Activated CD4-positive, alpha-beta memory T cell treated with anti-CD3 and anti-CD28 coated beads, Interleukin-2, amount 10 ng/mL, durations not matched to agents 7 days and 5 days (primary cell): ENCODE measurements at regions of chr2 and their contacts with region 1.

Region 1: DNA sequence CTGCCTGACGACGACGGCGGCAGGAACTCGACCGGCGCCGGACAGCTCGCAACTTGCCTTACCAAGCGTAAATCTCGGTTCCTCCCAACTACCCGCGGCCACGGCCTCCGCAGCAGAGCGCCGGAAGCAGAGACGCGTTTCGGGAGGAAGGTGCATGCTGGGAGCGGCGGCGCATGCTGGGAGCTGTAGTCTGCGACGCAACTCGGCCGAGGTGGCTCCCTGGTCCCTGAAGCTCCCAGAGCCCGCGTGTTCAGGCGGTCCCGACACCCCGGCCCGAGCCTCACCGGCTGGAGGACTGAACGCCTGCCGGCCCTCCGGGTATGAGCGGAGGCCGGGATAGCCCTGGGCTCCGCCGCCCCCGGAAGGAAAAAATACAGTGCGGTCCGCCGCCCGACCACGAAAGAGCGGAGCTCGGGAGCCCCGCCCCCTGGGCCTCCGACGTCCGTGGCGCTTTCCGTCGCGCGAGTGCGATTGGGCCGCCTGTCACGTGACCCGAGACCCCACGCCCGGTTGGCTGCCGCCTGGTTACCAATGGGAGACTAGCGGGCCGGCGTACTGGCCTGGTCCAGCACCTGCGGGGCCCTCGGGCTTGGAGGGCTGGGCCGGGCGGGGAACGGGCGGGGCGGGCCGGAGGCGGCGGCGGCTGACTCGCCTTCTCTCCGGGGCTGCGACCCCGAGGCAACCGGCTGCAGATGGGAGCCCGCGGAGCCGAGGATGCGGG is at the start of gene CAPN10:
- DNase-seq: peak; percentile 97
- H3K4me3 Mint-ChIP-seq: peak within 1 kb of the TSS; percentile 91
- H3K27ac Mint-ChIP-seq: peak within 1 kb of the TSS; percentile 89
- H3K4me1 Mint-ChIP-seq: peaks cover 54% of the 10 kb centered on the region
- H3K27me3 Mint-ChIP-seq: no peaks in the 10 kb centered on the region
- total RNA-seq, gene CAPN10: 52.3 to 53.1 TPM

Region 2: DNA sequence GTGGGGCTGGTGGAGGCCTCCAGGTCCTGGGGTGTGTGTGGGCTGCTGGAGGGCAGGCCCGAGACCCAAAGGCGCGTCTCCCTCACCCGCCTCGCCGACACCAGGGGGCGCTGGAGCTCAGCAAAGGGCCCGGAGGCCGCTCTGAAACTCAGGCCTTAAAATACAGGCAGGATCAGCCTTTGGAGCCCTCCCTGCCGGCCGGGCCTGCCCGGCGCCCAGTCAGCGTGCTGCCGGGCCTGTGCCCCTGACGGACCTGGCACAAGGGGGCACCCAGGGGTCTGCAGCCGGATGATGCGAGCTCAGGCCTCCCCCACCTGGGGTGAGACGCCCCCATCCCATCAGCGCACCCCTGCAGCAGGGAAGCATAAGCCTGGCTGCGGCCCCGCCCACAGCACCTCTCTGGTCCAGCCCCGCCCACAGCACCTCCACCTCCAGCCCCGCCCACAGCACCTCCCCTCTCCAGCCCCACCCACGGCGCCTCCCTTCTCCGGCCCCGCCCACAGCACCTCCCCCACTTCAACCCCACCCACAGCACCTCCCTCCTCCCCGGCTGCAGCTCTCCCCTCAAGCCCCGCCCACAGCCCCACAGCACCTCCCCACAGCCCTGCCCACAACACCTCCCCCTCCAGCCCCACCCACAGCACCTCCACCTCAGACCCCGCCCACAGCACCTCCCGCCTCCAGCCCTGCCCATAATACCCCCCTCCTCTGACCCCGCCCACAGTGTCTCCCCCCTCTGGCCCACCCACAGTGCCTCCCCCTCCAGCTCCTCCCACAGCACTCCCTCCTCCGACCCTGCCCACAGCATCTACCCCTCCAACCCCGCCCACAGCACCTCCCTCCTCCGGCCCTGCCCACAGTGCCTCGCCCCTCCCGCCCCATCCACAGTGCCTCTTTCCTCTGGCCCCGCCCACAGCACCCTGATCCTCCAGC is 353.1 kb before region 1 on chr2:
- CTCF ChIA-PET with region 1: no interaction called
- POLR2A ChIA-PET with region 1: no interaction called
- DNase-seq: peak; percentile 74
- H3K4me3 Mint-ChIP-seq: no peak overlapping the region
- H3K27ac Mint-ChIP-seq: no peak overlapping the region
- H3K4me1 Mint-ChIP-seq: peaks cover 4% of the 10 kb centered on the region
- H3K27me3 Mint-ChIP-seq: peaks cover 2% of the 10 kb centered on the region

Region 3: DNA sequence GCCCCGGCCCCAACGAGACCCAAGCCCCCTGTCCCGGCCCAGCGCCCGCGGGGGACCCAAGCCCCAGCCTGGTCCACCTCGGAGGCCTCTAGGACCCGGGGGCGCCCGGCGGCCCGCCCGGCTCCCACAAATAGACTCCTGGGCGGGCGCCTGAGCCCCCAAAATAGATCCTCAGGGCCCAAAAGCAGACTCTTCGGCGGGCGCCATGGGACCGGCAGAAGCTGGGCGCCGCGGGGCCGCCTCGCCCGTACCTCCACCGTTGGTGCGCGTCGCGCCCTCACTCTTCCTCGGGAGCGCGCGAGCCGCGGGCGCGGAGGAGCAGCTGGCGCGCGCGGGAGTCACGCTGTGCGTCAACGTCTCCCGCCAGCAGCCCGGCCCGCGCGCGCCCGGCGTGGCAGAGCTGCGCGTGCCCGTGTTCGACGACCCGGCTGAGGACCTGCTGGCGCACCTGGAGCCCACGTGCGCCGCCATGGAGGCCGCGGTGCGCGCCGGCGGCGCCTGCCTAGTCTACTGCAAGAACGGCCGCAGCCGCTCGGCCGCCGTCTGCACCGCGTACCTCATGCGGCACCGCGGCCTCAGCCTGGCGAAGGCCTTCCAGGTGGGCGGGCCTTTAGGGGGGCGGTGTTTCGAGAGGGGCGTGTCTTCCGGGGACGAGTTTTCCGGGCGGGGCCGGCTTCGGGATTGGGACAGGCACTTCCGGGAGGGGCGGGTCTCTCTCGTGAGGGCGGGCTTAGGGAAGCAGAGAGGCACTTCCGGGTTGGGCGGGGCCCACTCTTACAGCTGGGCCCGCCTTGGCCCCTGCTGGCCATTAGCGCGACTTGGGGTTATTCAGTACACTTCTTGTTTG is 25.7 kb before region 1 on chr2:
- CTCF ChIA-PET with region 1: interaction called, 98 read pairs
- POLR2A ChIA-PET with region 1: interaction called, 127 read pairs
- DNase-seq: peak; percentile 100
- H3K4me3 Mint-ChIP-seq: peak overlapping the region; percentile 92
- H3K27ac Mint-ChIP-seq: peak overlapping the region; percentile 87
- H3K4me1 Mint-ChIP-seq: peaks cover 75% of the 10 kb centered on the region
- H3K27me3 Mint-ChIP-seq: no peaks in the 10 kb centered on the region

Region 4: DNA sequence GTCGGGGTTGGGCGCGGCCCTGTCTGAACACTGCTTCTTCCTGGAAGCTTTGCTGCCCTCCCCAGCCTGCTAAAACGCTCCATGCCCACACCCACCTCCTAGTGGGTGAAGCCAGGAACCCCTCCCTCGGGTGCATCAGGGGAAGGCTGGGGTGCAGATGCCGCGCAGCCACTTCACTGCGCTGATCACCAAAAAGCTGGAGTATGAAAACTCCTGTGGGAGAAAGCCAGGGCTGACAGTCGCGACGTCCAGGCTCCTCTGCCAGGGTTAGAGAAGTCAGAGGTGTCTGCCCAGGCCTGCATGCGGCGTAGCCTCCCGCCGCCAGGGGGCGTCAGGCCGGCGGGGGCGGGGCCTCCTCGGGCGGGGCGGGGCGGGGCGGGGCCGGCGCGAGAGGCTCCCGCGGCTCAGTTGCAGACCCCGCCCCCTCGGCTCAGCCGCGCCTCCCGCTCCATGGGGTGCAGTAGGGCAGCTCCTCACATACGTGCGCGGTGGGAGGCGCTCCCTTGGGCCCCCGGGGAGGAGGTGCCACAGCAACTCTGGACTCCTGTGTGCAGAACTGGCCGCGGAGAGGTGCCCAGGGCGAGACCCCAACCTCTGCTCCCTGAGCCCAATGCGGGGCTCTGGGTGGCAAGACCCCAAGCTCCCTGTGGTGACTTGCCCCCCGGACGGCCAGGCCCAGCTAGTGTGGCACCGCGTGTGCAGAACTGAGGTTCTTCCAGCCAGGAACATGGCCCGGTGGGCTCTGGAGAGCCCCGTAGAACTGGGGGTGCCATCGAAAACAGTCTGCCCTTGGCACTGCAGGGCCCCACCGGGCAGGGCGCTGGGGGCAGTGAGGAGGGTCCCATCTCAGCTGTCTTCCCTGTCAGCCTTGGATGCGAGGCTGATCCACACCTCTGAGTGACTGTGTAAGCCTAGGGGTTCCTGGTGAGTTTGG is 19.9 kb before region 1 on chr2:
- CTCF ChIA-PET with region 1: interaction called, 98 read pairs
- POLR2A ChIA-PET with region 1: interaction called, 127 read pairs
- DNase-seq: peak; percentile 97
- H3K4me3 Mint-ChIP-seq: peak overlapping the region; percentile 94
- H3K27ac Mint-ChIP-seq: peak overlapping the region; percentile 97
- H3K4me1 Mint-ChIP-seq: peaks cover 71% of the 10 kb centered on the region
- H3K27me3 Mint-ChIP-seq: no peaks in the 10 kb centered on the region

Region 5: GRCh38 chr2:240604291-240604938 is 18.1 kb after region 1 on chr2:
- CTCF ChIA-PET with region 1: no interaction called
- POLR2A ChIA-PET with region 1: no interaction called
- DNase-seq: no peak
- H3K4me3 Mint-ChIP-seq: no peak overlapping the region
- H3K27ac Mint-ChIP-seq: no peak overlapping the region
- H3K4me1 Mint-ChIP-seq: peaks cover 3% of the 10 kb centered on the region
- H3K27me3 Mint-ChIP-seq: no peaks in the 10 kb centered on the region

Region 6: DNA sequence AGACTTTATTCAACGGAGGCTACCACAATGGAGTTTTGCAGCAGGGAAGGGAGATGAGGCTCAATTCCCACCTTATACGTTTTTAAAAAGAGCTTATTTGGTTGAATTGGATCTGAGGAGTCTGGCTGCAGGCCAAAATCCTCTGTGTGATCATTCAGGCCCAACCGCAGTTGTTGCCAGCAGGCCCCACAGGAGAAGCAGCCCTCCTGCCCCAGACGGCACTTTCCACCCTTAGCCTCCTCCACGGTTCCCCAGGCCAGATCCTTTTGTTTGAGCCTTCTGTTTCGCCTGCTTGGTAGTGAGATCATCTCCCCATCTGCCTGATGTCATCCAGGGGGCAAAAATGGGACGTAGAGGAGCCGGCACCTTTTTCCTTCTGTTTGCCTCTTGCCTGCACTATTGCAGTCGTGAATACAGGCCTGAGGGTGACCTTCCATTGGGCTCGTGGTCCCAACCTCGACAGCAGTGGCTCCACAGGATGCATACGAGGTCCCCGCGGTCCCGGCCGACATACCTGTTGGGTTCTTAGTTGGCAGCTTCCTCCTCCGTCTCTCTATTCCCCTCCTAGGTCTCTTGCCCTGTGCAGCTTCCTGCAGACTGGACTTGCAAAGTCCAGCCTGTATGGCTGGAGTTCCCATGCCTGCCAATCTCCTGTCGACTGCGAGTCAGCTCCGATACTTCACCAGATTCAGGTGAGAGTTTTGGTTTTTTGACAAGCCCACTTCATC is 29.6 kb after region 1 on chr2:
- CTCF ChIA-PET with region 1: interaction called, 16 read pairs
- POLR2A ChIA-PET with region 1: interaction called, 50 read pairs
- DNase-seq: no peak
- H3K4me3 Mint-ChIP-seq: no peak overlapping the region
- H3K27ac Mint-ChIP-seq: no peak overlapping the region
- H3K4me1 Mint-ChIP-seq: peaks cover 29% of the 10 kb centered on the region
- H3K27me3 Mint-ChIP-seq: no peaks in the 10 kb centered on the region

Region 7: DNA sequence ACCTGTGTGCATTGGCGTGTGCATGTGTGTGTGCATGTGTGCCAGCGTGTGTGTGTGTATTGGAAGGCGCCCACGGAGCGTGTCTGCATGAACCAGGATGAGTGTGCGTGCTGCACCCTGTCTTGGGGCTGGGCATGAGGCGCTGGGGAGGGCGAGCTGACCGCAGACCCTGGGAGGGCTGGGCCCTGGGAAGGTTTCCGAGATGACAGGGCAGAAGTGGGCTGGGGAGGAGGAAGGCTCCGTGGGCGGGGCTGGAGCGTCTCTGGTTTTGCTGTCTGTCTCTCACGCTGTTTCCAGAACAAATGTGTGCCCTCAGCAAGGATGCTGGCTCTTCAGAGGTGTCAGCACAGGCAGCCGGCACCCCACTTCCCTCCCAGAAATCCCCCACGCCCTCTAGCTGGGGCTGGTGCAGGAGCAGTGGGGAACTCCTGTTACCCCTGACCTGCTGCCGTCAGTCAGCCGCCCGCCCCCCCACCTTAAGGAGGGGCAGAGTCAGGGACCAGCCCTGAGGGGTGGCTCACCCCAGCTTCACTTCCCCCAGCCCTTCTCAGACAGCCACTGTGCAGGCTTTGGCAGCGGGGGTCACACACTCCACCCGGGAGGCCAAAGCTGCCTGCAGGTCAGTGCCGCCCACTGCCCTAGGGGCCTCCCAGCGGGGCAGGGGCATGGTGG is 38.7 kb after region 1 on chr2 and contains the start of gene GPR35:
- CTCF ChIA-PET with region 1: interaction called, 16 read pairs
- POLR2A ChIA-PET with region 1: interaction called, 50 read pairs
- DNase-seq: peak; percentile 84
- H3K4me3 Mint-ChIP-seq: peak within 1 kb of the TSS; percentile 49
- H3K27ac Mint-ChIP-seq: peak within 1 kb of the TSS; percentile 87
- H3K4me1 Mint-ChIP-seq: peaks cover 59% of the 10 kb centered on the region
- H3K27me3 Mint-ChIP-seq: no peaks in the 10 kb centered on the region
- total RNA-seq, gene GPR35: 5.2 to 5.7 TPM

Region 8: DNA sequence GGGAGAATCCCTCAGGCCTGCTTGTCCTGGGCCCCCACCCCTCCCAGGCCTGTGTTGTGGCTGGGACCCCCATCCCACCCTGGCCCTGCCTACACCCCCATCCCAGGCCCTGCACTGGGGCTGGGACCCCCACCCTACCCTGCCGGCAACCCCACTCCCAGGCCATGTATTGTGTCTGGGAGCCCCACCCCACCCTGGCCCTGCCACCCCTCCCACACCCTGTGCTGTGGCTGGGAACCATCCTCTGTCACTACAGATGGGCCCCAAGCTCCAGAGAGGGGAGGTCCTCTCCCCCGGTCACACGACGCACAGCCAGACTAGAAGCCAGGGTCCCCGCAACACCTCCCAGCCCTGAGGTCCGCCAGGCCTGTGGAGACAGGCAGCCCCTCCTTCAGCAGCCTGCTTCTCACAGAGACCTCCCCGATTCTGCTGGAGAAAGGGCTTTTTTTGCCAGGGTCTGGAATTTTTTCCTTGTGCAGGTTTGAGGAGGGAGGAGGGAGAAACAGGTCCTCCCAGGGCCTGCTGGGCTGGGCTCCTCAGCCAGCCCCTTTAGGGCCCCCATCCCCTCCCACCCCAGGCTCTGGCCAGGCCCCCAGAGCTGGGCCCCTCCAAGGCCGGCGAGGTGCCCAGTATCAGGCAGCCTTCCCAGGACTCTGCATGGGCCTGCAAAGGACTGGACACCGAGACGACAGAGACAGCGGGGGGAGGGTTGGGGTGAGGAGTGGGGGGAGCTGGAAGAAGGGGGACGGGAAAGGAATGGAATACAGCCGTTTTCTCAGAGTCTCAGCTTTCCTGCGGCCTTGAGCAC is 205.7 kb after region 1 on chr2:
- CTCF ChIA-PET with region 1: no interaction called
- POLR2A ChIA-PET with region 1: no interaction called
- DNase-seq: no peak
- H3K4me3 Mint-ChIP-seq: no peak overlapping the region
- H3K27ac Mint-ChIP-seq: no peak overlapping the region
- H3K4me1 Mint-ChIP-seq: no peaks in the 10 kb centered on the region
- H3K27me3 Mint-ChIP-seq: no peaks in the 10 kb centered on the region